ENCODE measurements at regions of chr12 and their contacts with region 1.

Region 1: GRCh38 chr12:54439521-54440255 is 20.6 kb upstream of the ITGA5 start:
- ATAC-seq: peak in 7 of 8 experiments; percentile 50 to 93 (median 69)
- H3K4me3 ChIP-seq: no peak overlapping the region
- H3K27ac ChIP-seq: no peak overlapping the region
- H3K4me1 ChIP-seq: peaks cover 0 to 4% of the 10 kb centered on the region in 2 donors

Region 2: DNA sequence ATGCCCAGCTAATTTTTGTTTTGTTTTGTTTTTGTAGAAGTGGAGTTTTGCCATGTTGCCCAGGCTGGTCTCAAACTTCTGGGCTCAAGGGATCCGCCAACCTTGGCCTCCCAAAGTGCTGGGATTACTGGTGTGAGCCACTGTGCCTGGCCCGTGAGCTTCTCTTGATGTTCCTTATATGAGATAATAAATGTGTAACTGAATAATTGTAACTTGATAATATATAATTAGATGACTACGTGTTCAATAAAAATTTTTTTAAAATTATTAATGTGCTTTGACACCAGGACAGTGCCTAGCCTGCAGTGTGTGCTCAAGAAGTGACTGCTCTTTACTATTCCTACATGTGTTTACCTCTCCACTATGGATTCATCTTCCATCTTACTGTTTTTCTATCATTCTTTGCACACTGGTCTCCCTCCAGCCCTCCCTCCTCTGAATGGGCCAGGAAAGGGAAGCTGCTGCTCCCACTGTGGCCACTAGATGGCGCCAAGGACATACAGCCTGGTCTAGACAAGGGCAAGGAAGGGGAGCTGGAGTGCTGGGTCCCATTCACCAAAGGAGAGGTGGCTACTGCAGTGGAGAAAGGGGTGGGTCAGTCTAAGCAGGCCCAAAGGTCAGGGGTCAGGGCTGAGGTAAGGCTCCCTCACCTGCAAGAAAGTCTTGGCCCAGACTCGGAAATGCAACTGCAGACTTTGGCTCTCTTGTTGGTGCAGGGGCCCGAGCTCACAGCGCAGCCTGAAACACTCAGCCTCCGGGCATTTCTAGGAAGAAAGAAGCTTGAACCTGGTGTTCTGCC is 40.5 kb before region 1 on chr12:
- in situ Hi-C with region 1: loop called in 1 of 9 experiments (anchors 10 kb)
- ATAC-seq: peak; percentile 79 to 98 (median 88)
- H3K4me3 ChIP-seq: no peak overlapping the region
- H3K27ac ChIP-seq: no peak overlapping the region
- H3K4me1 ChIP-seq: no peaks in the 10 kb centered on the region

Measured in motor neuron (in vitro differentiated cells).